PC-9 (cell line): ENCODE measurements at regions of chr22 and their contacts with region 1.

Region 1: DNA sequence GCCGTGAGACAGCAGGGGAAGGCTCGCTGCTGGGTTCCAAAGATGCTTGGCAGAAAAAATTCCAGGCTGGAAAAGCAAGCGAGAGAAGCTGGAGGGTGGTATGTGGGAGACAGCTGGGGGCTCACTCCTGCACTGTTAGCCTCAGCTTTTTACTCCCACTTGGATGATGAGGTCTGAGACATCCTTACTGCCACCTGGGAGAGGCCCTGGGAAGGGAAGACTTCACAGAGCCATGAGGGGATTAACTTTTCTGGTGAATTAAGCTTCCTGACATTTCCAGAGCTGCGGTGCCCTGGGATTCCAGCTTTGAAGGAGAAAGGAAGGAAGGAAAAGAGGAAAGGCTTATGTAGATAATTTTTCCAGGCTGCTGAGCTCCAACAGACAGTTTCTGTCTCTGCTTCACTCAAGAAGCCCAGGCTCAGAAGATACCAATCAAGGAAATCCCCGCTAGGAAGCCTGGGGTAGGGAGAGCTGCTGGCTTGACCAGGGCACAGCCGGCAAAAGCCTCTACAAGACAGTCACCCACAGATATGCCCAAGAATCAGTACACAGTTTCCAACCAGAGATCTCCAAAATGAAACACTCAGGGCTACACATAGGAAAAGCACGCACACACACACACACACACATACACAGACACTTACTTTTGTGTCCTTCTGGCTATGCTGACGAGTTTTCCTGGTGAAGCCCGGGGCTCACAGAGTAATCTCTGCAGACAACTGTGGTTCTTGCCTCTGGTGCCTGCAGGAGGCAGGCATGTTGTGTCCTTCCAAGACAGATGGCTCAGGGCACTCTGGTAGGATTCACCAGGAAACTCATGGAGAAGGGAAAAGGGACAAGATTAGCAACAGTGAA is 907 bp downstream of the MCHR1 start:
- DNase-seq: no peak
- H3K4me3 ChIP-seq: no peak overlapping the region
- H3K27ac ChIP-seq: no peak overlapping the region
- H3K4me1 ChIP-seq: peaks cover 13% of the 10 kb centered on the region
- H3K27me3 ChIP-seq: no peaks in the 10 kb centered on the region
- CTCF ChIP-seq: no peak

Region 2: GRCh38 chr22:40597526-40598430 is 82.4 kb before region 1 on chr22:
- CTCF ChIA-PET with region 1: interaction called, 17 read pairs
- POLR2A ChIA-PET with region 1: no interaction called
- intact Hi-C with region 1: no loop called
- DNase-seq: peak in 1 of 2 experiments; percentile 5
- H3K4me3 ChIP-seq: no peak overlapping the region
- H3K27ac ChIP-seq: peak overlapping the region; percentile 24; the same call in 1 of the 2 replicates
- H3K4me1 ChIP-seq: peaks cover 40% of the 10 kb centered on the region
- H3K27me3 ChIP-seq: no peaks in the 10 kb centered on the region
- CTCF ChIP-seq: no peak

Region 3: DNA sequence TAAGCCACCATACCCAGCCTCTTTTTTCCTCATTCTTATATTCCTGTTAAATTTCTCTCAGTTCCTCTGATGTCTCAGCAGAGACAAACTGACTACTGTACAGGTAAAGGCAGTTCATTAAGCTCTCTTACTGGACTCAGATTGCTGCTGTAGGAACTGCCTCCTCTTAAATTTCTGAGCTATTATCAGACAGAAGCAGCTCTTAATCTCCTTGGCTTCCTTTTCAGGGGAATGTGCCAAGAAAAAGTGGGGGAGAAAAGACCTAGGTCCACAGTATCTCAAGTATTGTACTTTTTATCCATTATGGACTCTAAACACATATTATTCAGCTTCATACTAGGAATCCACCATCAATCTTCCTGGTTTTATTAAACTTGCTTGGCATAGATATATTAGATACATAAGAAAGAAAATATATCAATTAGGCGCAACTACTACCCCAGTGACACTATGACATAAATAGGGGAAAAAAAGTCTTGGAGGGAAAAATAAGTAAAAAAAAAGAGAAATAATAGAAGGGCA is 69.8 kb before region 1 on chr22:
- CTCF ChIA-PET with region 1: no interaction called
- POLR2A ChIA-PET with region 1: no interaction called
- intact Hi-C with region 1: no loop called
- DNase-seq: no peak
- H3K4me3 ChIP-seq: no peak overlapping the region
- H3K27ac ChIP-seq: no peak overlapping the region
- H3K4me1 ChIP-seq: peaks cover 23% of the 10 kb centered on the region
- H3K27me3 ChIP-seq: no peaks in the 10 kb centered on the region
- CTCF ChIP-seq: no peak

Region 4: GRCh38 chr22:40739721-40740120 is 59.5 kb after region 1 on chr22:
- CTCF ChIA-PET with region 1: interaction called, 13 read pairs
- POLR2A ChIA-PET with region 1: no interaction called
- intact Hi-C with region 1: no loop called
- DNase-seq: no peak
- H3K4me3 ChIP-seq: no peak overlapping the region
- H3K27ac ChIP-seq: no peak overlapping the region
- H3K4me1 ChIP-seq: no peaks in the 10 kb centered on the region
- H3K27me3 ChIP-seq: no peaks in the 10 kb centered on the region
- CTCF ChIP-seq: no peak

Region 5: DNA sequence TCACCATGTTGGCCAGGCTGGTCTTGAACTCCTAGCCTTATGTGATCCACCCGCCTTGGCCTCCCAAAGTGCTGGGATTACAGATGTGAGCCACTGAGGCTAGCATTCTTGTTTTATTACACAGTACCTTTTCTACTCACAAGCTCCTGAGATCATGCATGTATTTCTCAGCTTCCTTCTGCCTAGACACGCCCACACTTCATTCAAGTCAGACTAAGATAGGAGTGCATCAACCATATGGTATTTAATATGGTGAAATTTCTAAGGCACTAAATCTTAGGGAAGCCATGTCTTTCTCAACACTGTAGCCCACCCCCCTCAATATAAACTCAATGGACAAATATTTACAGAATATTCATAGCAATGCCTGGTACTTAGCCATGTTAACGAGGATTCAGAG is 76.9 kb after region 1 on chr22:
- CTCF ChIA-PET with region 1: interaction called, 13 read pairs
- POLR2A ChIA-PET with region 1: no interaction called
- intact Hi-C with region 1: loop called (anchors 1 kb)
- DNase-seq: peak in 1 of 2 experiments; percentile 57
- H3K4me3 ChIP-seq: no peak overlapping the region
- H3K27ac ChIP-seq: no peak overlapping the region
- H3K4me1 ChIP-seq: peaks cover 22% of the 10 kb centered on the region
- H3K27me3 ChIP-seq: no peaks in the 10 kb centered on the region
- CTCF ChIP-seq: no peak

Region 6: GRCh38 chr22:40764763-40765441 is 84.7 kb after region 1 on chr22:
- CTCF ChIA-PET with region 1: interaction called, 13 read pairs
- POLR2A ChIA-PET with region 1: no interaction called
- intact Hi-C with region 1: loop called (anchors 1 kb)
- DNase-seq: no peak
- H3K4me3 ChIP-seq: no peak overlapping the region
- H3K27ac ChIP-seq: no peak overlapping the region
- H3K4me1 ChIP-seq: no peaks in the 10 kb centered on the region
- H3K27me3 ChIP-seq: no peaks in the 10 kb centered on the region
- CTCF ChIP-seq: no peak

Region 7: GRCh38 chr22:40818747-40819598 is 138.8 kb after region 1 on chr22 and contains the start of gene SLC25A17:
- CTCF ChIA-PET with region 1: no interaction called
- POLR2A ChIA-PET with region 1: no interaction called
- intact Hi-C with region 1: loop called (anchors 2 kb)
- DNase-seq: peak; percentile 78 to 85
- H3K4me3 ChIP-seq: peak within 1 kb of the TSS; percentile 98
- H3K27ac ChIP-seq: peak within 1 kb of the TSS; percentile 45
- H3K4me1 ChIP-seq: peaks cover 20% of the 10 kb centered on the region
- H3K27me3 ChIP-seq: no peaks in the 10 kb centered on the region
- CTCF ChIP-seq: peak; percentile 42; the same call in 1 of the 2 replicates
- total RNA-seq, gene SLC25A17: 25.0 and 28.1 TPM in 2 replicates

Region 8: GRCh38 chr22:40898850-40899357 is 218.7 kb after region 1 on chr22:
- CTCF ChIA-PET with region 1: no interaction called
- POLR2A ChIA-PET with region 1: no interaction called
- intact Hi-C with region 1: loop called (anchors 1 kb)
- DNase-seq: peak in 1 of 2 experiments; percentile 67
- H3K4me3 ChIP-seq: no peak overlapping the region
- H3K27ac ChIP-seq: no peak overlapping the region
- H3K4me1 ChIP-seq: no peaks in the 10 kb centered on the region
- H3K27me3 ChIP-seq: no peaks in the 10 kb centered on the region
- CTCF ChIP-seq: peak; percentile 77